Ovary (tissue), 10 donors: ENCODE measurements at regions of chr13 and their contacts with region 1.

Region 1: GRCh38 chr13:20828539-20829364 is 55.0 kb upstream of the EEF1AKMT1 start:
- DNase-seq: peak in 1 of 5 donors; percentile 31
- H3K4me3 ChIP-seq: no peak overlapping the region
- H3K27ac ChIP-seq: no peak overlapping the region
- H3K4me1 ChIP-seq: no peaks in the 10 kb centered on the region
- H3K27me3 ChIP-seq: no peaks in the 10 kb centered on the region
- CTCF ChIP-seq: peak; percentile 51 to 67 (median 66)
- EP300 ChIP-seq: no peak
- POLR2A ChIP-seq: no peak

Region 2: GRCh38 chr13:20713751-20714150 is 115.0 kb before region 1 on chr13:
- intact Hi-C with region 1: loop called in 3 of 4 experiments (anchors 5 to 10 kb)
- DNase-seq: peak in 1 of 5 donors; percentile 43
- H3K4me3 ChIP-seq: no peak overlapping the region
- H3K27ac ChIP-seq: peak overlapping the region in 1 of 2 donors; percentile 65
- H3K4me1 ChIP-seq: peaks cover 11% of the 10 kb centered on the region
- H3K27me3 ChIP-seq: no peaks in the 10 kb centered on the region
- CTCF ChIP-seq: no peak
- EP300 ChIP-seq: no peak
- POLR2A ChIP-seq: no peak

Region 3: GRCh38 chr13:20727856-20728255 is 100.9 kb before region 1 on chr13:
- intact Hi-C with region 1: no loop called
- DNase-seq: no peak
- H3K4me3 ChIP-seq: no peak overlapping the region
- H3K27ac ChIP-seq: no peak overlapping the region
- H3K4me1 ChIP-seq: no peaks in the 10 kb centered on the region
- H3K27me3 ChIP-seq: no peaks in the 10 kb centered on the region
- CTCF ChIP-seq: no peak
- EP300 ChIP-seq: no peak
- POLR2A ChIP-seq: no peak

Region 4: DNA sequence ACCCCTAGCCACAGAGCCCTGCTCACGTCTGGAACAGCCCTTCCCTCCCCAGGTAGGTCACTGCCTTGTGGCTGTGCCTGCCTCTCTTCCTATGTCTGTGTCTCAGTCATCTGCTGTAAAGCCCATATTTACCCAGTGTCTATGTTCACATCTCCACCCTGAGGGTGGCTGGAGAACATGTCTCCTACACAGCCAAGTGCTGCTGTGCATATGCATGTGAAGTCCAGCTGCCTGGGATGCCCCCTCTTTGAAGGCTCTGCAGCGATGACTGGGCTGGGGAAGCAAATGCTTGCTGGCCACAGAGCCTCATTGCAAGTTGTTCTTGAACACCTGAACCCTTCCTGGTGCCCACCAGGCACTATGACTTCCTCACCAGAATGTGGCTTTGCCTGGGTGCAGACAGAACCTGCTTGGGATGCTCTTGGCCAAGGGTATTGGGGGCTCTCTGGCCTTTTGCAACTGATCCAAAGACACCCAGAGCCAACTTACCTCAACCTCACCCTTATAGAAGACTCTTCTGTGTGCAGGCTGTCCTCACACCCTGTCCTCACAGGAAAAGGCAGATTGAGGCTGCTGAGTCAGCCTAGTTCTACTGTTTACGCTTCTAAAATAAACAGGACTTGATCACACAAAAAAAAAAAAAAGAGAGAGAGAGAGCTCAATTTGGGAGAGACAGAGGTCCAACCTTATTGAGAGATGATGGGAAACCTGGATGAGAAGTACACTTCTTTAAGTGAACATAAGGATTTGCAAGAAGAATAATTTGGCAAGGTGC is 374.2 kb after region 1 on chr13:
- intact Hi-C with region 1: no loop called
- DNase-seq: no peak
- H3K4me3 ChIP-seq: no peak overlapping the region
- H3K27ac ChIP-seq: no peak overlapping the region
- H3K4me1 ChIP-seq: no peaks in the 10 kb centered on the region
- H3K27me3 ChIP-seq: no peaks in the 10 kb centered on the region
- CTCF ChIP-seq: no peak
- EP300 ChIP-seq: no peak
- POLR2A ChIP-seq: no peak